ENCODE measurements at regions of chr17 and their contacts with region 1.

Region 1: GRCh38 chr17:5486204-5487124 is at the start of gene MIS12:
- H3K4me3 Mint-ChIP-seq: peak within 1 kb of the TSS; percentile 96
- H3K27ac Mint-ChIP-seq: peak within 1 kb of the TSS; percentile 99
- H3K4me1 Mint-ChIP-seq: peaks cover 35% of the 10 kb centered on the region
- H3K27me3 Mint-ChIP-seq: no peaks in the 10 kb centered on the region

Region 2: GRCh38 chr17:5419356-5419958 is 67.0 kb before region 1 on chr17 and contains the start of gene NUP88:
- intact Hi-C with region 1: loop called (anchors 1 kb)
- H3K4me3 Mint-ChIP-seq: peak within 1 kb of the TSS; percentile 100
- H3K27ac Mint-ChIP-seq: peak within 1 kb of the TSS; percentile 93
- H3K4me1 Mint-ChIP-seq: peaks cover 11% of the 10 kb centered on the region
- H3K27me3 Mint-ChIP-seq: no peaks in the 10 kb centered on the region